GM12878 (cell line): ENCODE measurements at regions of chr3 and their contacts with region 1.

Region 1: GRCh38 chr3:23859016-23859743 is 53.4 kb downstream of the UBE2E1 start:
- DNase-seq: no peak
- ATAC-seq: no peak
- H3K4me3 ChIP-seq: no peak overlapping the region
- H3K27ac ChIP-seq: no peak overlapping the region
- H3K4me1 ChIP-seq: peaks cover 30% of the 10 kb centered on the region
- H3K27me3 ChIP-seq: no peaks in the 10 kb centered on the region
- CTCF ChIP-seq: no peak
- EP300 ChIP-seq: no peak
- POLR2A ChIP-seq: no peak
- RAD21 ChIP-seq: no peak

Region 2: DNA sequence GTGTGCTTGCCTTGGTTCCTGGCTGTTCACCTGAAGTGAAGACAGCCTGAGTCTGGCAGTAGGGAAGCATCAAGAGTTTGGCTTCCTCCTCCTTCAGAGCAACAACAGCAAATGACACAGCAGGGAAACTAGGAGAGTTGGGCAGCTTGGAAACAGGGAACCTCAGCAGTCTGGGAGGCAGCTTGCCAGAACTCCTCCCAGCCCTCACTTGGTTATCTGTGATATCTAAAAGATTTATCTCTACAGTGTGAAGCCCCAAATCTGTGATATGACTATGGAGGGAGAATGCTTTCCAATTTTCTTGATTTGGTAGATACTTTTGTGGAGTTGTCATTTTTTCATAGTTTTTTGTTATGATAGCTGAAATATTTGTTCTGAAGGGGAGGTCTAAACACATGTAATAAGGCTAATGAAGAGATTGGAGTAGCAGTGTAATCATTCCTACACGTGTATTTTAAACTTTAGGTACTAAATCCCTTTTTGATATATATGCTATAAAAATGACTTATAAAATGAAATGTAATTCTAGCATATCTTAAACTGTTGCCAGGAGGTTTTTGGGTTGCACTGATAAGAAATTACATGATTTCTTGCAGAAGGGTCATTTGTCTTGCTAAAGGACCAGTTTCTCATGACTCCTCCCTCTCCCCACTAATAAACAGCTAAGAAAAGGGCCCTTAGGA is 32.7 kb before region 1 on chr3:
- CTCF ChIA-PET with region 1: interaction called, 9 read pairs
- POLR2A ChIA-PET with region 1: interaction called, 14 read pairs
- RAD21 ChIA-PET with region 1: interaction called, 62 read pairs
- SMC1A ChIA-PET with region 1: interaction called, 171 read pairs
- in situ Hi-C with region 1: no loop called
- intact Hi-C with region 1: no loop called
- DNase-seq: no peak
- ATAC-seq: no peak
- H3K4me3 ChIP-seq: no peak overlapping the region
- H3K27ac ChIP-seq: peak overlapping the region; percentile 52; the same call in 1 of the 2 replicates
- H3K4me1 ChIP-seq: peaks cover 42% of the 10 kb centered on the region
- H3K27me3 ChIP-seq: no peaks in the 10 kb centered on the region
- CTCF ChIP-seq: no peak
- EP300 ChIP-seq: no peak
- POLR2A ChIP-seq: no peak
- RAD21 ChIP-seq: no peak

Region 3: GRCh38 chr3:23845326-23846221 is 13.6 kb before region 1 on chr3:
- CTCF ChIA-PET with region 1: interaction called, 5 read pairs
- POLR2A ChIA-PET with region 1: interaction called, 4 read pairs
- RAD21 ChIA-PET with region 1: interaction called, 5 read pairs
- SMC1A ChIA-PET with region 1: interaction called, 35 read pairs
- in situ Hi-C with region 1: no loop called
- intact Hi-C with region 1: no loop called
- DNase-seq: no peak
- ATAC-seq: 0 out of 3 replicates have a peak, but pooled peaks have one; percentile 24
- H3K4me3 ChIP-seq: no peak overlapping the region
- H3K27ac ChIP-seq: no peak overlapping the region
- H3K4me1 ChIP-seq: peaks cover 6% of the 10 kb centered on the region
- H3K27me3 ChIP-seq: no peaks in the 10 kb centered on the region
- CTCF ChIP-seq: no peak
- EP300 ChIP-seq: no peak
- POLR2A ChIP-seq: no peak
- RAD21 ChIP-seq: no peak

Region 4: GRCh38 chr3:24389108-24390090 is 530.2 kb after region 1 on chr3:
- CTCF ChIA-PET with region 1: no interaction called
- POLR2A ChIA-PET with region 1: no interaction called
- RAD21 ChIA-PET with region 1: no interaction called
- SMC1A ChIA-PET with region 1: no interaction called
- in situ Hi-C with region 1: no loop called
- intact Hi-C with region 1: no loop called
- DNase-seq: no peak
- ATAC-seq: no peak
- H3K4me3 ChIP-seq: no peak overlapping the region
- H3K27ac ChIP-seq: no peak overlapping the region
- H3K4me1 ChIP-seq: no peaks in the 10 kb centered on the region
- H3K27me3 ChIP-seq: no peaks in the 10 kb centered on the region; a peak in 1 of 4 replicates
- CTCF ChIP-seq: no peak
- EP300 ChIP-seq: no peak
- POLR2A ChIP-seq: no peak
- RAD21 ChIP-seq: no peak